ENCODE measurements at regions of chr16 and their contacts with region 1.

Region 1: GRCh38 chr16:89085755-89086154 is 7.9 kb upstream of the ACSF3 start:
- DNase-seq: peak in 1 of 4 experiments; percentile 39
- ATAC-seq: peak; percentile 50; the same call in 2 of the 3 replicates
- H3K4me3 ChIP-seq: no peak overlapping the region
- H3K27ac ChIP-seq: no peak overlapping the region
- H3K4me1 ChIP-seq: peaks cover 9 to 34% of the 10 kb centered on the region in 2 experiments; a peak in 4 of 5 replicates
- H3K27me3 ChIP-seq: peaks cover 34 to 60% of the 10 kb centered on the region in 2 experiments; a peak in 4 of 5 replicates
- CTCF ChIP-seq: no peak
- EP300 ChIP-seq: no peak
- POLR2A ChIP-seq: no peak
- RAD21 ChIP-seq: no peak

Region 2: DNA sequence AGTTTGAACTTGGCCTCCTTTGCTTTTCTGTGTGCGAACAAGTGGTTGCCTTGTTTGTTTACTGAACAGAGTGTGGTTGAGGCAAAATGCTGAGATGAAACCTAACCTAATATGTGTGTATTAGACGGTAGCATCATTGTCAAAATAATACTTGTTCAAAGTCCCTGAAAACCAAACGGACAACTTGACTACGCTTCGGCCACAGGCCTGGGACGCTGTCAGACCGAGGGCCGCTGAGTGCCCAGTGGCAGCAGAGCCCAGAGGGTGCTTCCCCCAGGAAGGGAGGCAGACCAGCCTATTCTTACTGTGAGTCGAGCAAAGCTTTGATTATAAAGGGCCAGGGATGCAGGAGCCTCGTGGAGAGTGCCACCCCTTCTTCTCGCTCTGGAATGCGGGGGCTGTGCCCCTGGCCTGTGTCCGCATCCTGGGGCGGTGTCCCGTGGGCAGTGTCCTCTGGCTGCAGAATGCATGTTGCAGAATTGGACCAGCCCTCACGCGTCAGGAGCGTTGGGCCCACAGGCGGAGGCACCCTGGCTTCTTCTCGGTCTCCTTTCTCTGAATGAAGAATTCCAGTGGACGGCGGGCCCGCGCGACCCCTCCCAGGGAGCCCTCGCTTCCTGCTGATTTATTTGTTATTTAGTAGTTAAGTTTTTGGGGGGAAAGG is 13.1 kb after region 1 on chr16:
- CTCF ChIA-PET with region 1: no interaction called
- POLR2A ChIA-PET with region 1: interaction called, 10 read pairs
- in situ Hi-C with region 1: no loop called
- intact Hi-C with region 1: no loop called
- DNase-seq: no peak
- ATAC-seq: no peak
- H3K4me3 ChIP-seq: no peak overlapping the region
- H3K27ac ChIP-seq: peak overlapping the region; percentile 26; the same call in 1 of the 3 replicates
- H3K4me1 ChIP-seq: peaks cover 25 to 77% of the 10 kb centered on the region in 2 experiments; a peak in 4 of 5 replicates
- H3K27me3 ChIP-seq: no peaks in the 10 kb centered on the region
- CTCF ChIP-seq: no peak
- EP300 ChIP-seq: no peak
- POLR2A ChIP-seq: no peak
- RAD21 ChIP-seq: no peak